ENCODE measurements at regions of chr6 and their contacts with region 1.

Region 1: GRCh38 chr6:130843575-130844320 is 16.5 kb downstream of the SMLR1 start:
- DNase-seq: peak in 4 of 14 experiments; percentile 3 to 76 (median 72)
- ATAC-seq: peak; percentile 87
- H3K4me3 ChIP-seq: no peak overlapping the region
- H3K4me3 Mint-ChIP-seq: no peak overlapping the region
- H3K27ac ChIP-seq: no peak overlapping the region
- H3K27ac Mint-ChIP-seq: no peak overlapping the region
- H3K4me1 ChIP-seq: no peaks in the 10 kb centered on the region
- H3K4me1 Mint-ChIP-seq: peaks cover 2% of the 10 kb centered on the region
- H3K27me3 ChIP-seq: no peaks in the 10 kb centered on the region
- H3K27me3 Mint-ChIP-seq: no peaks in the 10 kb centered on the region
- CTCF ChIP-seq: peak; percentile 66

Region 2: DNA sequence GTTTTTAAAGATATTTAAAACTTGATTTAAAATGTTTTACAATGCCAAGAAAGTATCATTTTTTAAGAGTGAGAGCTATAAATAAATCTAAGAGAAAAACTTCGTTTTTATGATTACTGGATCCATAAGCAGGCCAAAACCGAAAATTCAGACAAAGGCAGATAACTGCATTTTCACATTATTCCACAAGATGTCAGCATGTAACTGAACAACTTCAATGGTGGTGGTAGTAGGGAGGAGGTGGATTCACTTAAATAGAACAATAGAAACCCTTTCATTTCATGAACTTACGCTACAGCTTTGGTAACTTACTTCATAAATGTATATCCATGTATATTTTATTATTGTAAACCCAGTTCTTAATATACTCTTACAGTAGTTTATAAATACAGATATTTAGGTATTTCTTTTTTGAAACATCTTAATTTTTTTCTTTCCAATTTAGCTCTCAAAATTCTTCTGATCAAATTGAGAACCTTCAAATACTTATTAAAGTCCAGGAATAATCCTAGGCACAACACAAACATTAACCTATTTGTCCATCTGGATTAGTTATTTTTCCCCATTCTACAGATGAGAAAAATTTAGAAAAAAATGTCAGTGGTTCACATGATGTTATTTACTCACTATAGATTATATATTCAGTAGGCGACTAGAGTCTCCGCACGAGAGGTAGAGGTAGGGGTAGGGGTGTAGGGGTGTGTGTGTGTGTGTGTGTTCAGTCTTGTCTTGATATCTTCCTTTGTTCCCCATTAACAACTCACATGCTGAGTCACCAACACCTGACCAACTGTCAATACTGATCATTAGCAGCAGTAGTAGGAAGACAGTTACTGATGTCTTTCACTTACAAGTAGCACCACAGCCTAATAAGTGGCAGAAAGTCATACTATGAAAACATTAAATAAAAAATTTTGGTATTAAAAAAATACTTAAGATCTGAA is 1245.2 kb before region 1 on chr6:
- CTCF ChIA-PET with region 1: no interaction called
- POLR2A ChIA-PET with region 1: no interaction called
- intact Hi-C with region 1: loop called in 1 of 2 experiments (anchors 1 kb)
- DNase-seq: peak in 4 of 14 experiments; percentile 8 to 84 (median 80)
- ATAC-seq: peak; percentile 98
- H3K4me3 ChIP-seq: no peak overlapping the region
- H3K4me3 Mint-ChIP-seq: no peak overlapping the region
- H3K27ac ChIP-seq: no peak overlapping the region
- H3K27ac Mint-ChIP-seq: no peak overlapping the region
- H3K4me1 ChIP-seq: no peaks in the 10 kb centered on the region
- H3K4me1 Mint-ChIP-seq: no peaks in the 10 kb centered on the region
- H3K27me3 ChIP-seq: no peaks in the 10 kb centered on the region
- H3K27me3 Mint-ChIP-seq: no peaks in the 10 kb centered on the region
- CTCF ChIP-seq: peak; percentile 90

Region 3: DNA sequence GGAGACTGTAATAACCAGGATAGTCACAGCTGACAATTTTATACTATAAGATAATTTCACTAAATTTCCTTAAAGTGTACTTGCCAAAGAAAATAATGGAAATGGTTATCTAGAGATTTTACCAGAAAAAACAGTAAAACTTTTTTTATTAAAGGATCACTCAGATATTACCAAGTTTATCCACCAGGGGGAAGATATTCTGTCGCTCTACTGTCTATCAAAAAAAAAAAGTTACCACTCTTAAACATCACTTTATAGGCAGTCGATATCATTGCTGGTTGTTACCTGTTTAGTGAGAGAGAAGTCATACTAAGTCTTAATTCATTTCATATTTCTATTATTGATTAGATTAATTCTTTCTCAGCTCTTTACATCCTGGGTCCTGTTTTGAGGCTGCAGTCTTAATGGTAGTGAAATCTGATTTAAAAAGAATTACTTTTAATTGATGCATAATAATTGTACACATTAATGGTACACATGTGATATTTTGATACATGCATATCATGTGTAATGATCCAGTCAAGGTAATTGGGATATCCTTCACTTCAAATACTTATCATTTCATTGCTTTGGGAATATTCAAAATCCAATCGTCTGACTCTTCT is 806.4 kb before region 1 on chr6:
- CTCF ChIA-PET with region 1: no interaction called
- POLR2A ChIA-PET with region 1: no interaction called
- intact Hi-C with region 1: loop called (anchors 5 kb)
- DNase-seq: peak in 3 of 14 experiments; percentile 36 to 60 (median 56)
- ATAC-seq: peak; percentile 73
- H3K4me3 ChIP-seq: no peak overlapping the region
- H3K4me3 Mint-ChIP-seq: no peak overlapping the region
- H3K27ac ChIP-seq: no peak overlapping the region
- H3K27ac Mint-ChIP-seq: no peak overlapping the region
- H3K4me1 ChIP-seq: peaks cover 11% of the 10 kb centered on the region
- H3K4me1 Mint-ChIP-seq: peaks cover 76% of the 10 kb centered on the region
- H3K27me3 ChIP-seq: no peaks in the 10 kb centered on the region
- H3K27me3 Mint-ChIP-seq: no peaks in the 10 kb centered on the region
- CTCF ChIP-seq: peak; percentile 74

Region 4: GRCh38 chr6:130076512-130076911 is 767.2 kb before region 1 on chr6:
- CTCF ChIA-PET with region 1: no interaction called
- POLR2A ChIA-PET with region 1: no interaction called
- intact Hi-C with region 1: loop called in 1 of 2 experiments (anchors 10 kb)
- DNase-seq: peak in 3 of 14 experiments; percentile 26 to 44 (median 28)
- ATAC-seq: no peak
- H3K4me3 ChIP-seq: no peak overlapping the region
- H3K4me3 Mint-ChIP-seq: no peak overlapping the region
- H3K27ac ChIP-seq: no peak overlapping the region
- H3K27ac Mint-ChIP-seq: peak overlapping the region; percentile 12
- H3K4me1 ChIP-seq: no peaks in the 10 kb centered on the region
- H3K4me1 Mint-ChIP-seq: peaks cover 21% of the 10 kb centered on the region
- H3K27me3 ChIP-seq: no peaks in the 10 kb centered on the region
- H3K27me3 Mint-ChIP-seq: no peaks in the 10 kb centered on the region
- CTCF ChIP-seq: peak; percentile 22

Region 5: DNA sequence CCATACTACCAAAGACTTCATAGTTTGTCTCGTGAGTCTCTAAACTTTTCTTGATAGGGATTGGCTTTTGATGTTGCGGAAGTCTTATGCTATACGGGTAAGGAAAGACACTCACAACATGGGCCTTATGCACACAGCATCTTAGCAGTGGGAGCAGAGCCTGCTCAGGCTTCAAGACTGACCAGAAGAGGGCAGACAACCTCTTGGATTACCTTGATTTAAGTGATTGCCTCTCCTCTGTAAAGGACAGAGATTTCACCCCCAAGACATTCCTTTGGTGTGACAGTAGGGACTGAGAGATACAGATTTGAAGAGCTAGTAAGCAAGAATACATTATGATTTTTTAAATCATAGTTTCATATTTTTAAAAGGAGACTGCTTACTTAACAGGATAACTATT is 549.9 kb before region 1 on chr6:
- CTCF ChIA-PET with region 1: no interaction called
- POLR2A ChIA-PET with region 1: no interaction called
- intact Hi-C with region 1: loop called in 1 of 2 experiments (anchors 1 kb)
- DNase-seq: peak in 9 of 14 experiments; percentile 7 to 68 (median 18)
- ATAC-seq: peak; percentile 68
- H3K4me3 ChIP-seq: no peak overlapping the region
- H3K4me3 Mint-ChIP-seq: no peak overlapping the region
- H3K27ac ChIP-seq: no peak overlapping the region
- H3K27ac Mint-ChIP-seq: no peak overlapping the region
- H3K4me1 ChIP-seq: no peaks in the 10 kb centered on the region
- H3K4me1 Mint-ChIP-seq: no peaks in the 10 kb centered on the region
- H3K27me3 ChIP-seq: no peaks in the 10 kb centered on the region
- H3K27me3 Mint-ChIP-seq: no peaks in the 10 kb centered on the region
- CTCF ChIP-seq: peak; percentile 56

Region 6: DNA sequence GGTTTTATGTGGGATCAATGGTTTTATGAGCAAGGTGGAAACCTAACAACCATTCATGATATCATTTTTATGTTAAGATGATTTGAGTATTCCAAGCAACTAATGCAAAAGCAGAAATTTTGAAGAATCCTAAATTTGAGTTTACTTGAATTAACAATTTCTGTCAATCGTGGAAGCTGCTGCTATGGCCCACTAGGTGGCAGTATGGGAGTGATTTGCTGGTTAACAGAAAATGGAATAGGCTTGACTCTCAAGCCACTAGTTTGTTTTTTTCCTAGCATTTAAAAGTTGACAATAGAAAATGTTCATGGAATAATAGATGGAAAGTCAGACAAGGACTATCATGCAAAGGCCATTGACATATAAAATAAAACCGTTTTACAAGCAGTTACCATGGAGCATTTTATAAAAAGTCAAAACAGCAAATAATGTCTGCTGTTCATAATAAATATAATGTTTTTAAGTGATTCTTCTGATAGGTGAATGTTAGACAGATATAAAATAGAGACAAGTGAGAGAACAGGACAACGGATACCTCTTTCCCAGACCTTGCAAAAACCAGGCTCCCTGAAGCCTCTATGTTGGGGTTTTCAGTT is 521.0 kb before region 1 on chr6:
- CTCF ChIA-PET with region 1: interaction called, 8 read pairs
- POLR2A ChIA-PET with region 1: no interaction called
- intact Hi-C with region 1: loop called (anchors 1 kb)
- DNase-seq: peak; percentile 16 to 83 (median 42)
- ATAC-seq: peak; percentile 44
- H3K4me3 ChIP-seq: no peak overlapping the region
- H3K4me3 Mint-ChIP-seq: no peak overlapping the region
- H3K27ac ChIP-seq: no peak overlapping the region
- H3K27ac Mint-ChIP-seq: no peak overlapping the region
- H3K4me1 ChIP-seq: no peaks in the 10 kb centered on the region
- H3K4me1 Mint-ChIP-seq: peaks cover 4% of the 10 kb centered on the region
- H3K27me3 ChIP-seq: no peaks in the 10 kb centered on the region
- H3K27me3 Mint-ChIP-seq: no peaks in the 10 kb centered on the region
- CTCF ChIP-seq: peak; percentile 93

Region 7: DNA sequence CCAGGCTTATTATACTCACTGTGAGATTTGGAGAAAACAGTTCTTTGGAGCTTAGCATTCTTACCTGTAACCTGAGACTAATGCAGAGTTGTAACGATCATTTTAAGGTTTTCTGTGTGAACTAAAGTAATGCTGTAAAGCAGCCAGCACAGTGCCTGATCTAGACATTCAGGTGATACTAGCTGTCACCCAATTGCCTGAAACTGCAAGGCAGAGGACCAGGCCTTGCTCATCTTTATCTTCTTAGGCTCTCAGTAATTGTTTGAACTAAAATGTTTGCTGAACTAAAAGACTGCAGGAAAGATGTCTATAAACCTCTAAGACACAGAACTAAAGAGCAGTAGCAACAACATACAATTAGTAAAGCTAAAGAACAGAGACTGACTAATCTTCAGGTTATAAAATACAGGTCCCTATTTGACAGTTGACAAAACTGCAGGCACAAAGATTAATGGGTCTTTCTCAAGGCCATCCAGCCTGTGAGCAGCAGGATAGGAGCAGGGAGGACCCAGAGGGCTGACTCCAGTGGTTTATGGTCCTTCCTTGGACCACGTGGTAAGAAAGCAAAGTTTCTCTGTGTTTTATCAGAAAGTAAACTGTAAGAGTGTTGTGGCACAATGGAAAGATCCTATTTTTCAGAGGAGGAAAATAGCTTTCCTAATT is 14.9 kb after region 1 on chr6:
- CTCF ChIA-PET with region 1: no interaction called
- POLR2A ChIA-PET with region 1: no interaction called
- intact Hi-C with region 1: no loop called
- DNase-seq: no peak
- ATAC-seq: no peak
- H3K4me3 ChIP-seq: no peak overlapping the region
- H3K4me3 Mint-ChIP-seq: no peak overlapping the region
- H3K27ac ChIP-seq: no peak overlapping the region
- H3K27ac Mint-ChIP-seq: no peak overlapping the region
- H3K4me1 ChIP-seq: no peaks in the 10 kb centered on the region
- H3K4me1 Mint-ChIP-seq: no peaks in the 10 kb centered on the region
- H3K27me3 ChIP-seq: no peaks in the 10 kb centered on the region
- H3K27me3 Mint-ChIP-seq: no peaks in the 10 kb centered on the region
- CTCF ChIP-seq: no peak

Measured in CD4-positive, alpha-beta T cell (primary cell).